ENCODE measurements at regions of chr12 and their contacts with region 1.

Region 1: DNA sequence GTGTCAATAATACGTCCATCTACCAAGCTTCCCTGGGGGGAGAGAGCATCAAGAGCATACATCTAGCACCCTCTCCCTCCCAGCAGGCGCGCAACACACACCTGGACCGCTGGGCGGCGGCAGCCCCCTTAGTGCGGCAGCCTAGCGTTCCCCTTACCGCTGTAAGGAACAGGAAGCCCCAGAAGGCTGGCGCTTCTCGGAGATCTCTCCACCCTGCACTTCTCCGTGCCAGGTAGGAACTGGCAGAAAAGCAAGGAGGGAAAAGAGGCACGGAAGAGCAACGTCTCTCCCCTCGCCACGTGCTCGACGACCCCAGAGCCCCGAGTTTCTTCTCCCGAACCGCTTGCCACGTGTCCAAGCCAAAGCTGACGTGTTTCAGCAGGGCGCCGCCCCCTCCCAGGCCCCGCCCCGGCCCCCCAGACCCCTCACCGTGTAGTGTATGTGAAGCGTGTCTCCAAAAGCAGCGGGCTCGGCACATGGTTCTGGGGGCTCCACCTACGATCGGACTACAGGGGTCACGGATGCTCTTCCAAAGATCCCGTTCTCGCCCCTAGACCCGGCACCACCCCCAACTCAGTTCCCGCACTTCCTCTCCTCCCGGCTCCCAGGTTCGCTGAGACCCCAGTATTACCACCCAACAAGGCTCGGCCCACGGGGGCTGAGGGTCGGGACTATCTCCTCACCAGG is 532 bp downstream of the FKBP11 start:
- DNase-seq: peak; percentile 85
- ATAC-seq: peak; percentile 75
- H3K4me3 Mint-ChIP-seq: peak overlapping the region; percentile 83
- H3K27ac Mint-ChIP-seq: peak overlapping the region; percentile 93
- H3K4me1 Mint-ChIP-seq: peaks cover 52% of the 10 kb centered on the region
- H3K27me3 Mint-ChIP-seq: no peaks in the 10 kb centered on the region

Region 2: DNA sequence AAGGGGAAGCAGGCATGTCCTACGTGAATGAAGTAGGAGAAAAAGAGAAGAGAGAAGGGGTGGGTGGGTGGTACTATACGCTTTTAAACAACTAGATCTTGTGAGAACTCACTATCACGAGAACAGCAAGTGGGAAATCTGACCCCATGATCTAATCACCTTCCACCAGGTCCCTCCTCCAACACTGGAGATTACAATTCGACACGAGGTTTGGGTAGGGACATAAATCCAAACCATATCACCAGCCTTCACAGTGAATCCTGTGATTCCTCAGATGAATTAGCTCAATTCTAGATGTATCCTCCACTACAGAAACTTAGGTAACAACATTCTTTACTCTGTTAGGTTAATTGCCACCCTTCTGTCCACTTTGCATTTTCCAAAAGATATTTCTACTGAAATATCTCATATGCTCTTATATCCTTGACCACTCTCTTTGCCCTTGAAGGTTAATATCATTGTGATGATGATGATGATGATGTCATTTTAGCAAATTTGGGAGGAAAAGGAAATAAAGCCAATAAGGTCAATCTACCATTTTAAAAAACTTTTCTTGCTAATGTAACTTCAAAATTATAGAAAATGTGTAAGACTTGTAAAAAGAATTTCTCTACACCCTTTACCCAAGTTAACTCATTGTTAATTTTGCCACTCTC is 185.0 kb before region 1 on chr12:
- CTCF ChIA-PET with region 1: no interaction called
- POLR2A ChIA-PET with region 1: no interaction called
- intact Hi-C with region 1: no loop called
- DNase-seq: no peak
- ATAC-seq: no peak
- H3K4me3 Mint-ChIP-seq: no peak overlapping the region
- H3K27ac Mint-ChIP-seq: no peak overlapping the region
- H3K4me1 Mint-ChIP-seq: no peaks in the 10 kb centered on the region
- H3K27me3 Mint-ChIP-seq: peaks cover 13% of the 10 kb centered on the region

Region 3: DNA sequence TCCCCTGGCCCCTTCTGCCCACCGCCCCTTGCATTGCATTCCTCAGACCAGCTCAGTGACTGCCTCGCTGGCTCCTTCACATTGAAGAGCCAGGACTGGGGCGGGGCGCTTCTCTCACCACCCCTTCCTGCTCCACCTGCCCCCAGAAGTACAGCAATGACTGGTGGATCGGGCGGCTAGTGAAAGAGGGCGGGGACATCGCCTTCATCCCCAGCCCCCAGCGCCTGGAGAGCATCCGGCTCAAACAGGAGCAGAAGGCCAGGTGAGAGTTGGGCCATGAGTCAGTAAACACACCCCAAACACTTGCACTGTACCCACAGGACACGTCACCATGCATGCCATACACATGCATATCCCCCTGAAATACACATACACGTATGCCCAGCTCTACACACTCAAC is 100.6 kb before region 1 on chr12:
- CTCF ChIA-PET with region 1: no interaction called
- POLR2A ChIA-PET with region 1: no interaction called
- intact Hi-C with region 1: no loop called
- DNase-seq: peak; percentile 40
- ATAC-seq: peak; percentile 61
- H3K4me3 Mint-ChIP-seq: no peak overlapping the region
- H3K27ac Mint-ChIP-seq: no peak overlapping the region
- H3K4me1 Mint-ChIP-seq: no peaks in the 10 kb centered on the region
- H3K27me3 Mint-ChIP-seq: no peaks in the 10 kb centered on the region

Region 4: DNA sequence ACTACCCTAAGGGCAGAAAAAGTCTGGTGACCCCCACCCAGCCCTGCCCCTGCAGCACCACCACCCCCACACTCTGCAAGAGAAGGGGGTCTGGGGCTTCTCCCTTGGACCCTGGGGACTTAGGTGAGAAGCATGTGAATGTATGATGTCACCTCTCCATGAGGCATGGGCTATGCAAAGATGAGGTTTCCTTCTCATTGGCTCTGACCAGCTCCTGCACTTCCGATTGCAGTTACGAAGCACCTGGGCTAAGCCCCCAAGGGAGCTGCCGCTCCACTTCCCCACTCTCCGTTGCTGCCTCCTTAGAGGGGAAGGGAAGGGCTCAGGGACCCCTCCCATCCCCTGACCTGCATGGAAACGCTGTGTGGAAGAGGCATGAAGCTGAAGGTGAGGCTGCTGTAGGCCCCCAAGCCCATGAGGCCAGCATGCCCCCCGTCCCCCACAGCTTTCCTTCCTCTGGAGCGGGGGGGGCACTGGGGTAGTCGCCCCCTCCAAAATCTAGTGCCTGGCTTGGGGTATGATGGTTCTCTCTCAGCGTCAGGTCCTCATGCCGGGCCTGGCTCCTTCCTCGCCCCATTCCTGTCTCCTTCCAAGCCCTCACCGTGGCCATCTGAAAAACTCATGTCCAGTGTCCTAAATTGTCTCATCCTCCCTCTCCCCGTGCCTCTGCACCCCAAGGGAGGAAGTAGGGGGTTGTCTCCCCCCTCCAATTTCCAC is 67.3 kb before region 1 on chr12:
- CTCF ChIA-PET with region 1: interaction called, 23 read pairs
- POLR2A ChIA-PET with region 1: interaction called, 14 read pairs
- intact Hi-C with region 1: loop called (anchors 2 kb)
- DNase-seq: no peak
- ATAC-seq: no peak
- H3K4me3 Mint-ChIP-seq: no peak overlapping the region
- H3K27ac Mint-ChIP-seq: no peak overlapping the region
- H3K4me1 Mint-ChIP-seq: peaks cover 12% of the 10 kb centered on the region
- H3K27me3 Mint-ChIP-seq: peaks cover 9% of the 10 kb centered on the region

Region 5: GRCh38 chr12:48903982-48904411 is 20.8 kb before region 1 on chr12:
- CTCF ChIA-PET with region 1: interaction called, 55 read pairs
- POLR2A ChIA-PET with region 1: interaction called, 4 read pairs
- intact Hi-C with region 1: no loop called
- DNase-seq: peak; percentile 92
- ATAC-seq: peak; percentile 94
- H3K4me3 Mint-ChIP-seq: peak overlapping the region; percentile 63
- H3K27ac Mint-ChIP-seq: no peak overlapping the region
- H3K4me1 Mint-ChIP-seq: peaks cover 5% of the 10 kb centered on the region
- H3K27me3 Mint-ChIP-seq: peaks cover 3% of the 10 kb centered on the region

Region 6: DNA sequence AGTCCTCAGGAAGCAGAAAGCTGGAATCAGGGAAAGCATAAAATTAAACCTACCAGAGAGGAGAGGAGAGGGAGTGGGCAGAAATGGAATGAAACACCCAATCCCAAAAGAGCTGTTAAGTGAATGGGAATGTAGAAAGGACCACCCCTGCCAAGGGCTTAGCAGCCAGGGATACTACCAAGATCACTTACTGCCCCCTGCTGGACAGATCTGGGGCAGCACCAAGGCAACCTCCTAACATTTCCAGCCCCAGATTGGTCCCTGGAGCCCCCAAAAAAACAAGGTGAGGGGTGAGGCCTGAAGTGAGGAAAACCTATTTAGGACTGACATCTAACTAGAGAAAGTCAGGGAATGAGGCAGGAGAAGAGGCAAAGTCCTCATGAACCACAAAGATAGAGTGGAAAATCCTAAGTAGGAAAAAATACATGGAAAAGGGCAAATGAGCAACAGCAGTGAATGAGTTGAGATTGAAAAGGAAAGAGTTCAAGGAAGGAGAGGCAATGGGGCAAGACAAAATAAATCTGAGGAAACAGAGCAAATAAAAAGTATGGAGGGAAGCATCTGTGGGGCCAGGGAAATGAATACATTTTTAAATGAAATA is 11.7 kb after region 1 on chr12:
- CTCF ChIA-PET with region 1: interaction called, 73 read pairs
- POLR2A ChIA-PET with region 1: interaction called, 4 read pairs
- intact Hi-C with region 1: no loop called
- DNase-seq: peak; percentile 89
- ATAC-seq: peak; percentile 82
- H3K4me3 Mint-ChIP-seq: no peak overlapping the region
- H3K27ac Mint-ChIP-seq: no peak overlapping the region
- H3K4me1 Mint-ChIP-seq: peaks cover 23% of the 10 kb centered on the region
- H3K27me3 Mint-ChIP-seq: no peaks in the 10 kb centered on the region

Region 7: DNA sequence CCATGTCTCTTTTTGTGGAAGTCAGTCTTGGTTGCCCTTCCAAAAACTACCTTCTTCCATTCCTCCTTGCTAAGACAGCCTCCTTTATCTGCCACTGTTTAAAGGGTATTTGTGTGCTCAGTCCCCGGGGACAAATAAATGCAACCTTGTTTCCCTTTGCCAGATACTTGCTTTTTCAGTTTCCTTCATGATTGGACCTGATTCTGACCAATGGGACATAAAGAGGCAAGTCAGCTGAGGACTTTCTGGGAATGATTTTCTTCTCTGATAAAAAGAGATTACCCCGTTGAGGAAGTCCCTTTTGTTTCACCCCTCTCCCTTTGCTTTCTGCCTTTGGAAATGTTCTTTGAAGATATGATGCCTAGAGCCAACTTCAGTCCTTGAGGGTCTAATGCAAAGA is 213.8 kb after region 1 on chr12:
- CTCF ChIA-PET with region 1: no interaction called
- POLR2A ChIA-PET with region 1: no interaction called
- intact Hi-C with region 1: no loop called
- DNase-seq: no peak
- ATAC-seq: no peak
- H3K4me3 Mint-ChIP-seq: no peak overlapping the region
- H3K27ac Mint-ChIP-seq: no peak overlapping the region
- H3K4me1 Mint-ChIP-seq: peaks cover 9% of the 10 kb centered on the region
- H3K27me3 Mint-ChIP-seq: no peaks in the 10 kb centered on the region

Region 8: GRCh38 chr12:49331380-49332222 is 406.8 kb after region 1 on chr12:
- CTCF ChIA-PET with region 1: no interaction called
- POLR2A ChIA-PET with region 1: no interaction called
- intact Hi-C with region 1: no loop called
- DNase-seq: no peak
- ATAC-seq: no peak
- H3K4me3 Mint-ChIP-seq: no peak overlapping the region
- H3K27ac Mint-ChIP-seq: no peak overlapping the region
- H3K4me1 Mint-ChIP-seq: peaks cover 10% of the 10 kb centered on the region
- H3K27me3 Mint-ChIP-seq: peaks cover 37% of the 10 kb centered on the region